ENCODE measurements at regions of chr7 and their contacts with region 1.

Region 1: DNA sequence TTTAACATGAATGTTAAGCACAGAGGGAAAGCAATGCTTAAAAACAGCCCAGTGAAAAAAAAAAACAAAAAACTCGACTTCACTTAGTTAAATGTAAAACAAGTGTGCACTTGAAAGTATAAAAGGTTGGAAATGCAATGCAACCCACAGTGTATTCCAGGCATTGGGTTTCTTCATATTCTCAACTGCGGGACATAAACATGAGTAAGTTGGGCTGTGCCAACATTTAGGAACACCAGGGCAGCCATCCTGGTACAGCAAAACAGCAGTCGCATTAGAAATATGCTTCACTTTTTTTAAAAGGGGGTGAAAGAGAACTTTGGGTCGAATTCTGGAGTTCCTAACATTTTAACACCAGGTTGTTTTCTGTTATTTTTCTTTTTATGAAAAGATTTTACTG is 937 bp downstream of the STEAP1 start:
- DNase-seq: no peak
- H3K4me3 ChIP-seq: peak overlapping the region; percentile 18 to 60 (median 60)
- H3K27ac ChIP-seq: no peak overlapping the region
- H3K4me1 ChIP-seq: peaks cover 5 to 11% (median 8%) of the 10 kb centered on the region in 4 donors
- H3K27me3 ChIP-seq: no peaks in the 10 kb centered on the region
- CTCF ChIP-seq: no peak
- EP300 ChIP-seq: no peak
- POLR2A ChIP-seq: no peak

Region 2: DNA sequence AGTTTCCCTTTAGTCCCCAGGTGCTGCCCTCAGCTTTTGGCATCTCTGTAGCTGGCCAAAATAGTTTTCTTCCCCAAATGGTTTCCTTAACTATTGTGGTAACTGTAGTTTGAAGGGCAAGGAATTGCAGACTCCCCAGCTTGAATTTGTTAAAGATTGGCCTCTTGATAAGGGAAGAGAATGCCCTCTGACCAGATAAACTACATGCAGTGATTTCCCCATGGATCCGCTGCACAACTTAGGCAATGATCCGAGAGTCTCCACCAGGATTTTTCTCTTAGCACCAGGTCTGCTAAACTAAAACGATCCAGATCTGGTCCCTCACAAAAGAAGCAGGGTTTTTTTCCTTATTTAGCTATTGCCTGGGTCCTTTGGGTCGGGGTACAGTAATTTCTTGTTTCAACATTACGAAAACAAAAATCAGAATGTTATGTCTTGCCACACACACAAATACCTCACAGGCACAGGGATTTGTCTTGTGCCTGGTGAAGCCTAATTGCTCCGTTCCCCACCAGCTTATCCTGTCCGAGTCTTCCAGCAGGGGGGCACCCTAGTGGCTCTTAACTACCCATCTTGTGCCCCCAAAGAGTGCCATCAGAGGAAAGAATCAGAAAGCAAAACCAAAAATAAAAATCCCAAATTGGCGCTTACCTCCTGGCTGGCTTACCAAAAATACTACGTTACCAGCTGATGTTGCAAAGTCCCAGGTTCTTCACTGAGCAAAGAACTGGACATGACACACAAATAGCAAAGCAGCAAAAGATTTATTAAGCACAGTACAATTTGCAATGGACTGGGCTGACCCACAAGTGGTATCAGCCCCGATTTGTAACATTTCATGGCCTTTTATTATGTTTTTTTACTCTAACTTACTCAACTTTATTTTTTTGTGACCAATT is 40.0 kb after region 1 on chr7:
- intact Hi-C with region 1: loop called (anchors 5 kb)
- DNase-seq: no peak
- H3K4me3 ChIP-seq: no peak overlapping the region
- H3K27ac ChIP-seq: no peak overlapping the region
- H3K4me1 ChIP-seq: no peaks in the 10 kb centered on the region
- H3K27me3 ChIP-seq: no peaks in the 10 kb centered on the region
- CTCF ChIP-seq: no peak
- EP300 ChIP-seq: no peak
- POLR2A ChIP-seq: no peak

Region 3: GRCh38 chr7:90211391-90212148 is 56.4 kb after region 1 on chr7 and contains the start of gene STEAP2:
- intact Hi-C with region 1: loop called (anchors 5 kb)
- DNase-seq: peak; percentile 96
- H3K4me3 ChIP-seq: peak within 1 kb of the TSS; percentile 77 to 84 (median 79)
- H3K27ac ChIP-seq: peak within 1 kb of the TSS; percentile 87 to 91 (median 88)
- H3K4me1 ChIP-seq: peaks cover 0 to 29% (median 19%) of the 10 kb centered on the region in 4 donors
- H3K27me3 ChIP-seq: peaks cover 0 to 8% (median 0%) of the 10 kb centered on the region in 4 donors
- CTCF ChIP-seq: peak; percentile 46 to 79 (median 48)
- EP300 ChIP-seq: no peak
- POLR2A ChIP-seq: peak; percentile 52
- total RNA-seq, gene STEAP2: 16.1 to 22.5 (median 19.3) TPM

Region 4: DNA sequence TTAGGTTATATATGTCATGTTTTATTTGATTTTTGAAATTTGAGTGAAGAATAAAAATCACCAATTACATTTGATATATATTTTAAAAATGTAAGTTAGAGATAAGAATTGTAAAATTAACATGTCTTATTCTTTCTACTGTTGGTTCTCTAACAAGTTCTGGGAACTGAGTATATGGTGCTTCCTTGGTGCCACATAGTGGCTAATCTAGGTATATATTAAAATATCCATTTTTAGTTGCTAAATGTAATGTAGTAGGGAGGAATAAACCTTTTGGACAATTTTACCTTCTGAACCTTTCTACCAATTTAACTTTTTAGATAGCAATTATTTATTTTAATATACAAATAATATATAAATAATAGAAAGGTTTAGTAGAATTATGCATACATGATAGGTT is 107.2 kb after region 1 on chr7:
- intact Hi-C with region 1: loop called (anchors 2 kb)
- DNase-seq: no peak
- H3K4me3 ChIP-seq: no peak overlapping the region
- H3K27ac ChIP-seq: no peak overlapping the region
- H3K4me1 ChIP-seq: no peaks in the 10 kb centered on the region
- H3K27me3 ChIP-seq: no peaks in the 10 kb centered on the region
- CTCF ChIP-seq: peak; percentile 48 to 60 (median 59)
- EP300 ChIP-seq: no peak
- POLR2A ChIP-seq: no peak

Region 5: GRCh38 chr7:90424720-90425119 is 269.5 kb after region 1 on chr7:
- intact Hi-C with region 1: loop called (anchors 5 kb)
- DNase-seq: no peak
- H3K4me3 ChIP-seq: no peak overlapping the region
- H3K27ac ChIP-seq: no peak overlapping the region
- H3K4me1 ChIP-seq: peaks cover 0 to 3% (median 0%) of the 10 kb centered on the region in 4 donors
- H3K27me3 ChIP-seq: no peaks in the 10 kb centered on the region
- CTCF ChIP-seq: no peak
- EP300 ChIP-seq: no peak
- POLR2A ChIP-seq: no peak

Measured in esophagus muscularis mucosa (tissue), 4 donors.